AG04449 (cell line): ENCODE measurements at regions of chr7 and their contacts with region 1.

Region 1: DNA sequence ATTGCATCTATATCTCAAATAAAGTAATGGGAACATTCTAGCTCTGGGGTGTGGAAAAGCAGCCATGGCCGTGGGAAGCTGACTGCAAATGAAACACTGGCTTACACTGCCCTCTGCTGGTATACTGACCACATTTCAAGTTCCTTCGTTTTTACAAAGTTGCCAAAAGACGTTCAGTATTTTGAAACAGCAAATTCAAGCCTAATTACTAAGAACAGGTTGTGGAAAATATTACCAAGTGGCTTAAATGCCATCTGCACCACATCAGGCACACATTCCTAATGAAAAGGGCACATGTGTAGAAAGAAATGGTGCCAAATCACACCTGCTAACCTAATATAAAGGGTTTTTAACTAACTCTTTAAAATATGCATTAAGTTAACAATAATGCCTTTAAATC is 83.9 kb downstream of the JAZF1 start:
- DNase-seq: no peak
- H3K4me3 ChIP-seq: no peak overlapping the region
- CTCF ChIP-seq: peak; percentile 76

Region 2: GRCh38 chr7:26918241-26918640 is 1178.5 kb before region 1 on chr7:
- CTCF ChIA-PET with region 1: no interaction called
- POLR2A ChIA-PET with region 1: no interaction called
- DNase-seq: no peak
- H3K4me3 ChIP-seq: no peak overlapping the region
- CTCF ChIP-seq: no peak

Region 3: DNA sequence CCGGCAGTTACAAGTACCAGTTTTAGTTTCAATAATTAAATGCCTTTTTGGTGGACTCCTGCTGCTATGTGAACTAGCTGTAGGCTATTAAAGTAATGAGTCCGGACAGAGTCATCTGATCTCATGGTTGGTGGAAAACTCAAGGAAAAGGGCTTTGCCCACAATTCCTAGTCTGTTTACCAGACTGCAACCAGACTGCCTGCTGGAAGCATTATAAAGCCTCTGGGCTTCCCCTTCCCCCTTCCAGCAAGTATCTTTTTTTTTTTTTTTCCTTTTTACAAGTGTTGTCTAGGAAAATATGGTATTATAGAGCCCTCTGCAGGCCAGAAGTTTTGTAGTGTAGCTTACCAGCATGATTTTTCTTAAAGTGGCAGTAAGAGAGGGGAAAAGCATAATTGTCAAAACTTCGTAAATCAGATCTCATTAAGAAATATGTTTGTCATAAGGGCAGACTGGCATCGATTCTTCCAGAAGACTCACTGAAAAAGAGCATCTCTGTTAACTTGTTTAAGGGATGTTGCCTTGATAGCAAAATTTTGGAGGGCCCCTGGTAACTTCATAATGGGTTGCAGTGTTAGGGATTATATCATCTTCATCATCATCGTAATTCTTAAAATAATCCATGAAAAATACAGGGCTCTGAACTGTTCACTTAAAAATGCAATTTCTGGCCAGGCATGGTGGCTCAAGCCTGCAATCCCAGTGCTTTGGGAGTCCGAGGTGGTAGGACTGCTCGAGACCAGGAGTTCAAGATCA is 175.5 kb before region 1 on chr7:
- CTCF ChIA-PET with region 1: interaction called, 14 read pairs
- POLR2A ChIA-PET with region 1: no interaction called
- DNase-seq: peak; percentile 71
- H3K4me3 ChIP-seq: no peak overlapping the region
- CTCF ChIP-seq: peak; percentile 18

Region 4: DNA sequence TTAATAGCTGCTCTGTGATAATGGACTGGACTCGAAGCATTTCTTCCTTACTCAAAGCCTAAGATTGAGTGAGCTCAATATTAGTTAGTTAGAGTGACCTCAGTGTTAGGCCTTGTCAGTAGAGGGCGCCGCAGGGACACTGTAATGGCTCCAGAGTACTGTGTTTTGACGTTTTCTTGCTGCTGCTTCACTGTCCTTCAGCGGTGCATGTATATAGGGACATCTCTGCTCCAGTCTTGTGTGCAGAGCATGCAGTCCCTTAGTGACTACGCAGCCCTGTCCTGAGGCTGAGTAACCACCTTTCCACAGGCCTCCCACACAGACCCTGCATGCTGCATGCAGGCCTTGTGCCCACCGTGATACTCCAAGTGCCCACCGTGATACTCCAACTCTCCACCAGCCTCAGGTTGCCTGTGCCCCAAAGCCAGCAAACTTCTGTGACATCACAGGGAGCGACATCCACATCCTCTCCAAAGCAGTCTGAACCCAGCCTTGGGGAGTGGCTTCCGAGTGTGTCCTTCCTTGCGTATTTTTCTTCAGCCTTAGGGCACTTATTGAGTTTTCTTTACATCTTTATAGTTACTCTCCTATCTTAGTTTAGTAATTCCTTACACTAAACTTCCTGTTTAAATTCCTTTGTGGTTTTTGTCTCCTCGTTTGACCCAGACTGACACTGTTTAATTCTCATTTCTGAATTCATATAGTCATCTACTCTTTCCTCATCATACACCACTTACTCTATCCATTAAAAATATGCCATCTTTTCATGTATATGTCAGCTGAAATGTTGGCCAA is 34.3 kb before region 1 on chr7:
- CTCF ChIA-PET with region 1: interaction called, 14 read pairs
- POLR2A ChIA-PET with region 1: no interaction called
- DNase-seq: no peak
- H3K4me3 ChIP-seq: no peak overlapping the region
- CTCF ChIP-seq: peak; percentile 64

Region 5: GRCh38 chr7:28078036-28078901 is 18.4 kb before region 1 on chr7:
- CTCF ChIA-PET with region 1: interaction called, 217 read pairs
- POLR2A ChIA-PET with region 1: no interaction called
- DNase-seq: no peak
- H3K4me3 ChIP-seq: no peak overlapping the region
- CTCF ChIP-seq: peak; percentile 86

Region 6: GRCh38 chr7:28125431-28126409 is 29.0 kb after region 1 on chr7:
- CTCF ChIA-PET with region 1: interaction called, 13 read pairs
- POLR2A ChIA-PET with region 1: interaction called, 4 read pairs
- DNase-seq: no peak
- H3K4me3 ChIP-seq: no peak overlapping the region
- CTCF ChIP-seq: no peak

Region 7: DNA sequence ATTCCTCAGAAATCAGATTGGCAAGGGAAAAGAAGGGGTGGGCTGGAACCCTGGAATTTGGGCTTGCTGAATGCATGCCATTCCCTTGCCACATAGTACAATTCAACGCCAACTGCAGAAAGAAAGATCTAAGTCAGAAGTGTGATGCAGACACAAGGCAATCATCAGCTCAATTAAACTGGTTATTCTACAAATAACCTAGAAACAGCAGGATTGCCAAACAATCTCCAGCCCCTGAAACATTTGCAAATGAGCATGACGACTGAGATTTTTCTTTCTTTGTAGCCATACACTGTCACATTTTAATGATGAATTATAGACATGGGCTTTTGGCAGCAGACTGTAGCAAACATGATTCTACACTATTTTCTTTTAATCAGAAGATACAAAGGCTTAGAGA is 299.1 kb after region 1 on chr7:
- CTCF ChIA-PET with region 1: no interaction called
- POLR2A ChIA-PET with region 1: no interaction called
- DNase-seq: no peak
- H3K4me3 ChIP-seq: no peak overlapping the region
- CTCF ChIP-seq: no peak

Region 8: DNA sequence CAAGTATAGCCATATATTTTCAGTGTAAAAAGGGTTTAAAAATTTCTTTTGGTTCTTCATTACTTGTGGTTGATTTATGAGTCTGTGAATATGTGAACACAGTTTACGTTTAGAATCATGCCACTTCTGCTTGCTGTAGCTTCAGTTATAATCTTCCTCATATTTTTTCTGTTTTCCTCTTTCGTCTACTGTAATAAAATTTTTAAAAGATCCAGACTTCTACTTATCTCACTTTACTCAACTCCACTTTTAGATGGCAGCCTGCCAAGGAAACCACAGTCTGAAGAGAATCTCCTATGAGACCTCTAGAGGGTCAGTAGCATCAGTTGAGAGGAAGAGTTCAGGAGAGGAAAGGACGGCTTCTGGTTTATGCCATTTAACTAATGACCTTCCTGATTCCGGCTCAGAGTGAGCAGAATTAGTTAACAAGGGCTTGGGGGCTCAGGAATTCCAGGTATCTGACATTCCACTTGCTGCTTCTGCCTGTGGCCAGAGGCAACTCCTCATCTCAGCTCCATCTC is 337.0 kb after region 1 on chr7:
- CTCF ChIA-PET with region 1: no interaction called
- POLR2A ChIA-PET with region 1: no interaction called
- DNase-seq: no peak
- H3K4me3 ChIP-seq: no peak overlapping the region
- CTCF ChIP-seq: no peak